Caco-2 (cell line): ENCODE measurements at regions of chr4 and their contacts with region 1.

Region 1: GRCh38 chr4:88823058-88823919 is 125.7 kb upstream of the NAP1L5 start:
- DNase-seq: peak; percentile 79 to 85
- H3K4me3 ChIP-seq: peak overlapping the region; percentile 41
- H3K4me3 Mint-ChIP-seq: peak overlapping the region; percentile 71
- H3K27ac Mint-ChIP-seq: peak overlapping the region; percentile 51
- H3K4me1 ChIP-seq: no peaks in the 10 kb centered on the region; the same call in 1 of the 2 replicates
- H3K4me1 Mint-ChIP-seq: no peaks in the 10 kb centered on the region
- H3K27me3 ChIP-seq: no peaks in the 10 kb centered on the region
- H3K27me3 Mint-ChIP-seq: no peaks in the 10 kb centered on the region
- CTCF ChIP-seq: no peak

Region 2: DNA sequence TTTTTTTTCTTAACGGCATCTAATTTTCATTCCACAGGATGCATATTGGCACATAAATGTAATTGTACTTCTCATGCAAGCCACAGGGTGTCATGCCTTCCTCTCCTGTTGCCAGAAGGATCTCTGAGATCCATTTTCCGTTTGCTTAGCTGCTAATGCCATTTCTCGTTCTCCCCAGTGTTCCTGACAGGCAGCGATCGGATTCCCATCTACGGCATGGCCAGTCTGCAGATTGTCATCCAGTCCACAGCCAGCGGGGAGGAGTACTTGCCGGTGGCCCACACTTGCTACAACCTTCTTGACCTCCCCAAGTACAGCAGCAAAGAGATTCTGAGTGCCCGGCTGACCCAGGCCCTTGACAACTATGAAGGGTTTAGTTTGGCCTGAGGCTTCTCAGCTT is 116.7 kb before region 1 on chr4:
- CTCF ChIA-PET with region 1: no interaction called
- POLR2A ChIA-PET with region 1: no interaction called
- intact Hi-C with region 1: loop called (anchors 2 kb)
- DNase-seq: peak; percentile 39 to 46
- H3K4me3 ChIP-seq: no peak overlapping the region
- H3K4me3 Mint-ChIP-seq: no peak overlapping the region
- H3K27ac Mint-ChIP-seq: no peak overlapping the region
- H3K4me1 ChIP-seq: no peaks in the 10 kb centered on the region
- H3K4me1 Mint-ChIP-seq: no peaks in the 10 kb centered on the region
- H3K27me3 ChIP-seq: no peaks in the 10 kb centered on the region
- H3K27me3 Mint-ChIP-seq: no peaks in the 10 kb centered on the region
- CTCF ChIP-seq: peak; percentile 45 to 52

Region 3: GRCh38 chr4:88878642-88879041 is 55.4 kb after region 1 on chr4:
- CTCF ChIA-PET with region 1: no interaction called
- POLR2A ChIA-PET with region 1: no interaction called
- intact Hi-C with region 1: loop called (anchors 1 kb)
- DNase-seq: no peak
- H3K4me3 ChIP-seq: no peak overlapping the region
- H3K4me3 Mint-ChIP-seq: no peak overlapping the region
- H3K27ac Mint-ChIP-seq: no peak overlapping the region
- H3K4me1 ChIP-seq: peaks cover 6% of the 10 kb centered on the region; the same call in 1 of the 2 replicates
- H3K4me1 Mint-ChIP-seq: no peaks in the 10 kb centered on the region
- H3K27me3 ChIP-seq: no peaks in the 10 kb centered on the region
- H3K27me3 Mint-ChIP-seq: no peaks in the 10 kb centered on the region
- CTCF ChIP-seq: no peak

Region 4: DNA sequence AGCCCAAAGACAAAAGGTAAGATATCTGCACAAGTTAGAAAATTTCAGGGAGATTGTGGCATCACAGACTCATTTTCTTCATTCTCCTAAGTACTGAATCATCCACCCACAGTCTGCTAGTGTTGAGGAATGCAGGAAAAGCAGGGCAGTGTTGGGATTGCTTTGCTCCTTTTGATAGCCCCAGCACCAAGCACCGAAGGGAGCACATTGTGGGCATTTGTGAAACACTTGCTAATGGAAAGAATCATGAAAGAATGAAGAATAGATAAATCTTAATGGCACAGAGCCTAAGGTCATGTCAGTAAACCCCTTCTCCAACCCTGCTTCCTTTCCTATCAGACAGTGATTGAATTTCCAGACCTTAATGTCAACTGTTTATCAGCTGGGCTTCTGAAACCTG is 587.4 kb after region 1 on chr4:
- CTCF ChIA-PET with region 1: no interaction called
- POLR2A ChIA-PET with region 1: no interaction called
- intact Hi-C with region 1: no loop called
- DNase-seq: no peak
- H3K4me3 ChIP-seq: no peak overlapping the region
- H3K4me3 Mint-ChIP-seq: no peak overlapping the region
- H3K27ac Mint-ChIP-seq: no peak overlapping the region
- H3K4me1 ChIP-seq: no peaks in the 10 kb centered on the region
- H3K4me1 Mint-ChIP-seq: no peaks in the 10 kb centered on the region
- H3K27me3 ChIP-seq: no peaks in the 10 kb centered on the region
- H3K27me3 Mint-ChIP-seq: peaks cover 8% of the 10 kb centered on the region
- CTCF ChIP-seq: no peak